ENCODE measurements at regions of chr5 and their contacts with region 1.

Region 1: GRCh38 chr5:80191991-80192398 is 63.9 kb downstream of the SERINC5 start:
- DNase-seq: peak; percentile 53
- H3K4me3 Mint-ChIP-seq: peak overlapping the region; percentile 75
- H3K27ac Mint-ChIP-seq: peak overlapping the region; percentile 97
- H3K4me1 Mint-ChIP-seq: peaks cover 78% of the 10 kb centered on the region
- H3K27me3 Mint-ChIP-seq: no peaks in the 10 kb centered on the region

Region 2: DNA sequence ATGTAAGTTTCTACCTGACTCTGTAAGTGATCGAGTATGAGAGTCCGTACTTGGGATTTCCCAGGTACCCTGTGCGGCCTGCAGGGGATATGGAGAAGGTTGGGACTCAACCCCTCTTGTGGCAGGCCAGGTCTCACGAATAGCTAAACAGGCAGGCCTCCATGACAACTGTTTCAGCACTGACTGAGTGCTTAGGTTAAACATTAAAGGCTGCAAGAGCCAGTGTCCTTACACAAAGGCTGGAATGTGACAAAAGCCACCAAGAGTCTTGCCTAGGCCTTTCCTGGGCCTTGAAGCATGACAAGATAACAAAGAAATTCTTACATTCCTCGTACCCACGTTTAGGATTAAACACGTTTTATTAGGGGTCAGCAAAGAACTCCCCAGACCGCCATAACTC is 98.2 kb before region 1 on chr5:
- intact Hi-C with region 1: loop called (anchors 5 kb)
- DNase-seq: no peak
- H3K4me3 Mint-ChIP-seq: no peak overlapping the region
- H3K27ac Mint-ChIP-seq: no peak overlapping the region
- H3K4me1 Mint-ChIP-seq: peaks cover 26% of the 10 kb centered on the region
- H3K27me3 Mint-ChIP-seq: no peaks in the 10 kb centered on the region

Region 3: GRCh38 chr5:80206282-80206681 is 14.3 kb after region 1 on chr5:
- intact Hi-C with region 1: loop called (anchors 2 kb)
- DNase-seq: no peak
- H3K4me3 Mint-ChIP-seq: no peak overlapping the region
- H3K27ac Mint-ChIP-seq: peak overlapping the region; percentile 35
- H3K4me1 Mint-ChIP-seq: peaks cover 59% of the 10 kb centered on the region
- H3K27me3 Mint-ChIP-seq: no peaks in the 10 kb centered on the region

Region 4: GRCh38 chr5:80216753-80217596 is 25.0 kb after region 1 on chr5:
- intact Hi-C with region 1: no loop called
- DNase-seq: no peak
- H3K4me3 Mint-ChIP-seq: no peak overlapping the region
- H3K27ac Mint-ChIP-seq: peak overlapping the region; percentile 31
- H3K4me1 Mint-ChIP-seq: peaks cover 68% of the 10 kb centered on the region
- H3K27me3 Mint-ChIP-seq: no peaks in the 10 kb centered on the region

Region 5: DNA sequence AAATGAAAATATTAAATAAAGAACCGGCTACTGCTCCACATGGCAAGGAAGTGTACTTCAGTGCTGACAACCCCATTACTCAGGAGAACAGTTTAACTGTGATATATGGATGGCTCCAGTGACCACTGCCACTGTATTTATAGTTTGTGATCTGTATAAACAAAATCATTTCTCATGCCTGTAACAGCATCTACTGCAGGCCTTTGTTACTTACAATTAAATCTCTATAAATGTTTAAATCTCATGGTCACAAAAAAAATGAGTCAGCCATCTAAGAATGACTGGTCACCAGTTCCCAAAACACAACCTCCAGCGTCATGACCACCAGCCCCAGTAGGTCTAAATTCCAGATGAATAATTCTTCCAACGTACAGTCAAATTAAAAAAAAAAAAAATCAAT is 39.2 kb after region 1 on chr5:
- intact Hi-C with region 1: loop called (anchors 5 kb)
- DNase-seq: no peak
- H3K4me3 Mint-ChIP-seq: no peak overlapping the region
- H3K27ac Mint-ChIP-seq: peak overlapping the region; percentile 29
- H3K4me1 Mint-ChIP-seq: peaks cover 34% of the 10 kb centered on the region
- H3K27me3 Mint-ChIP-seq: no peaks in the 10 kb centered on the region

Region 6: GRCh38 chr5:80246001-80246758 is 54.2 kb after region 1 on chr5:
- intact Hi-C with region 1: loop called (anchors 2 kb)
- DNase-seq: no peak
- H3K4me3 Mint-ChIP-seq: peak overlapping the region; percentile 31
- H3K27ac Mint-ChIP-seq: peak overlapping the region; percentile 78
- H3K4me1 Mint-ChIP-seq: peaks cover 43% of the 10 kb centered on the region
- H3K27me3 Mint-ChIP-seq: no peaks in the 10 kb centered on the region

Region 7: GRCh38 chr5:80255732-80256479 is 63.9 kb after region 1 on chr5 and contains the start of gene SERINC5:
- intact Hi-C with region 1: loop called (anchors 2 kb)
- DNase-seq: peak; percentile 83
- H3K4me3 Mint-ChIP-seq: peak within 1 kb of the TSS; percentile 95
- H3K27ac Mint-ChIP-seq: peak within 1 kb of the TSS; percentile 99
- H3K4me1 Mint-ChIP-seq: peaks cover 42% of the 10 kb centered on the region
- H3K27me3 Mint-ChIP-seq: no peaks in the 10 kb centered on the region
- total RNA-seq, gene SERINC5: 18.9 and 19.0 TPM in 2 replicates

Region 8: GRCh38 chr5:80341016-80341775 is 149.2 kb after region 1 on chr5:
- intact Hi-C with region 1: no loop called
- DNase-seq: no peak
- H3K4me3 Mint-ChIP-seq: no peak overlapping the region
- H3K27ac Mint-ChIP-seq: no peak overlapping the region
- H3K4me1 Mint-ChIP-seq: peaks cover 3% of the 10 kb centered on the region
- H3K27me3 Mint-ChIP-seq: peaks cover 15% of the 10 kb centered on the region

Region 9: DNA sequence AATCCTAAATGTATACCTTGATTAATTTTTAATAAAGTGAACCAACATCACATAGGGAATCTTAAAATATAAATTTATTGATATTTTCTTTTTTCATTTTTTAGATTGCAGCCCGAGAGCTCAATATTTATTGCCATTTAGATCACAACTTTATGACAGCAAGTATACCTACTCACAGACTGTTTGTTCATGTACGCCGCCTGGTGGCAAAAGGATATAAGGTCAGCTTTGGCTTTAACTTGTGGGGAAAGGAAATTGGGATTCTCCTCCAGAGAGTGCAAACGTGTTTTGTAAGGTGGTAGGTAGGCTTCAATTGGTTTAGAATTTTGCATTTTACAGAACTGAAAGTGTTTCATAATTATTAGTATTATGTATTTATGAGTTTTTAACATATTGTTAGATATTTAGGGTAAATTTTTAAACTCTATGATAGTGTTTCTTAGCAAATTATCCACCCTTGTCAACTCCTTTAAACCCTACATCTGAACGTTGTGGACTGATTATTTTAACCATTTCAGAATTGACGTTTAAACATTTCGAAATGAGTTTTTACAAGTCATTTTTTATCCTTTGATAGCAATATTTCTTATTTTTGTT is 480.2 kb after region 1 on chr5:
- intact Hi-C with region 1: no loop called
- DNase-seq: peak; percentile 43
- H3K4me3 Mint-ChIP-seq: no peak overlapping the region
- H3K27ac Mint-ChIP-seq: no peak overlapping the region
- H3K4me1 Mint-ChIP-seq: peaks cover 5% of the 10 kb centered on the region
- H3K27me3 Mint-ChIP-seq: no peaks in the 10 kb centered on the region